Caco-2 (cell line): ENCODE measurements at regions of chr1 and their contacts with region 1.

Region 1: DNA sequence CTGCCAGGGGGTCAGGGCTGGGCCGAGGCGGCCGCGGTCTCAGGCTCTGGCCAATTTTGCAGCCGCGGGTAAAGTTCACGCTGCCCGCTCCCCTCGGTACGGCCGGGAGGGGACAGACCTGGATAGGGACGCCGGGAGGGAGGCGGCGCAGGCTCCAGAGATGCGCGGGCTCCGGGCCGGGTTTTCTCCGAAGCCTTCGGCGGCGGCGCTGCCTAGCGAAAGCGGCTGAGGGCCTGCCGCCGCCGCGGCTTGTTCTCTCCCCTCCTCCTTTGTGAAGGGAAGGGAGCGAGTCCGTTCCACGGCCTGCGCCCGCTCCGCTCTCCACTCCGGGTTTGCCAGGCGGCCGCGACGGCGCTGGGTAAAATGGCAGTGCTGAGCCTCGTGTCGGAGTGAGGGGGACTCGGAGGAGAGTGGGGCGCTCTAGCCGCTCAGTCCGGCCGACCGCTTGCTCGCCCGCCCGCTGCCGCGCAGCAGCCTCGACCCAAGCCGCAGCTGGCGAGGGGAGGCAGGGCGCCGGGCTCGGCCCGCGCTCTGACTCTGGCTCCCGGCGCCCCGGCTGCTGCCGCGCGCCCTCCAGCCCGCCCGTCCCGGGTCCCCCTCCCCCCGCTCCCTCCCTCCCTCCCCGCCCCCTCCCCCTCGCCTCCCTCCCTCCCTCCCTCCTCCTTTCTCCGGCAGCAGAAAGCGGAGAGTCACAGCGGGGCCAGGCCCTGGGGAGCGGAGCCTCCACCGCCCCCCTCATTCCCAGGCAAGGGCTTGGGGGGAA is at the start of gene ARID1A:
- DNase-seq: peak; percentile 95 to 96
- H3K4me3 ChIP-seq: peak within 1 kb of the TSS; percentile 73
- H3K4me3 Mint-ChIP-seq: no peak within 1 kb of the TSS
- H3K27ac Mint-ChIP-seq: peak within 1 kb of the TSS; percentile 97
- H3K4me1 ChIP-seq: peaks cover 41% of the 10 kb centered on the region
- H3K4me1 Mint-ChIP-seq: peaks cover 17% of the 10 kb centered on the region
- H3K27me3 ChIP-seq: no peaks in the 10 kb centered on the region
- H3K27me3 Mint-ChIP-seq: no peaks in the 10 kb centered on the region
- CTCF ChIP-seq: peak in 1 of 2 experiments; percentile 25
- total RNA-seq, gene ARID1A: 66.5 and 73.3 TPM in 2 replicates

Region 2: GRCh38 chr1:26602378-26602959 is 93.1 kb before region 1 on chr1:
- CTCF ChIA-PET with region 1: interaction called, 4 read pairs
- POLR2A ChIA-PET with region 1: interaction called, 3 read pairs
- intact Hi-C with region 1: loop called (anchors 5 kb)
- DNase-seq: peak; percentile 46 to 63
- H3K4me3 ChIP-seq: no peak overlapping the region
- H3K4me3 Mint-ChIP-seq: no peak overlapping the region
- H3K27ac Mint-ChIP-seq: no peak overlapping the region
- H3K4me1 ChIP-seq: no peaks in the 10 kb centered on the region
- H3K4me1 Mint-ChIP-seq: no peaks in the 10 kb centered on the region
- H3K27me3 ChIP-seq: no peaks in the 10 kb centered on the region
- H3K27me3 Mint-ChIP-seq: no peaks in the 10 kb centered on the region
- CTCF ChIP-seq: peak; percentile 55 to 60

Region 3: GRCh38 chr1:26677306-26678115 is 18.0 kb before region 1 on chr1:
- CTCF ChIA-PET with region 1: interaction called, 38 read pairs
- POLR2A ChIA-PET with region 1: interaction called, 14 read pairs
- intact Hi-C with region 1: loop called (anchors 1 kb)
- DNase-seq: peak; percentile 79 to 84
- H3K4me3 ChIP-seq: no peak overlapping the region
- H3K4me3 Mint-ChIP-seq: peak overlapping the region; percentile 26
- H3K27ac Mint-ChIP-seq: no peak overlapping the region
- H3K4me1 ChIP-seq: no peaks in the 10 kb centered on the region
- H3K4me1 Mint-ChIP-seq: peaks cover 11% of the 10 kb centered on the region
- H3K27me3 ChIP-seq: no peaks in the 10 kb centered on the region
- H3K27me3 Mint-ChIP-seq: no peaks in the 10 kb centered on the region
- CTCF ChIP-seq: peak in 1 of 2 experiments; percentile 75

Region 4: GRCh38 chr1:26787706-26788514 is 92.4 kb after region 1 on chr1 and contains the start of gene PIGV:
- CTCF ChIA-PET with region 1: interaction called, 10 read pairs
- POLR2A ChIA-PET with region 1: interaction called, 16 read pairs
- intact Hi-C with region 1: loop called (anchors 1 kb)
- DNase-seq: peak; percentile 82 to 89
- H3K4me3 ChIP-seq: peak within 1 kb of the TSS; percentile 77
- H3K4me3 Mint-ChIP-seq: peak within 1 kb of the TSS; percentile 87
- H3K27ac Mint-ChIP-seq: peak within 1 kb of the TSS; percentile 90
- H3K4me1 ChIP-seq: peaks cover 44% of the 10 kb centered on the region
- H3K4me1 Mint-ChIP-seq: peaks cover 30% of the 10 kb centered on the region
- H3K27me3 ChIP-seq: no peaks in the 10 kb centered on the region
- H3K27me3 Mint-ChIP-seq: no peaks in the 10 kb centered on the region
- CTCF ChIP-seq: no peak
- total RNA-seq, gene PIGV: 10.0 and 12.3 TPM in 2 replicates

Region 5: GRCh38 chr1:26864610-26865527 is 169.3 kb after region 1 on chr1:
- CTCF ChIA-PET with region 1: no interaction called
- POLR2A ChIA-PET with region 1: interaction called, 13 read pairs
- intact Hi-C with region 1: loop called (anchors 10 kb)
- DNase-seq: peak; percentile 95 to 97
- H3K4me3 ChIP-seq: peak overlapping the region; percentile 56
- H3K4me3 Mint-ChIP-seq: peak overlapping the region; percentile 82
- H3K27ac Mint-ChIP-seq: peak overlapping the region; percentile 94
- H3K4me1 ChIP-seq: 0 out of 2 replicates have a peak, but pooled peaks cover 7% of the 10 kb centered on the region
- H3K4me1 Mint-ChIP-seq: peaks cover 14% of the 10 kb centered on the region
- H3K27me3 ChIP-seq: no peaks in the 10 kb centered on the region
- H3K27me3 Mint-ChIP-seq: no peaks in the 10 kb centered on the region
- CTCF ChIP-seq: no peak

Region 6: GRCh38 chr1:26874896-26875295 is 179.4 kb after region 1 on chr1:
- CTCF ChIA-PET with region 1: no interaction called
- POLR2A ChIA-PET with region 1: no interaction called
- intact Hi-C with region 1: no loop called
- DNase-seq: no peak
- H3K4me3 ChIP-seq: no peak overlapping the region
- H3K4me3 Mint-ChIP-seq: no peak overlapping the region
- H3K27ac Mint-ChIP-seq: no peak overlapping the region
- H3K4me1 ChIP-seq: no peaks in the 10 kb centered on the region
- H3K4me1 Mint-ChIP-seq: no peaks in the 10 kb centered on the region
- H3K27me3 ChIP-seq: no peaks in the 10 kb centered on the region
- H3K27me3 Mint-ChIP-seq: no peaks in the 10 kb centered on the region
- CTCF ChIP-seq: no peak

Region 7: DNA sequence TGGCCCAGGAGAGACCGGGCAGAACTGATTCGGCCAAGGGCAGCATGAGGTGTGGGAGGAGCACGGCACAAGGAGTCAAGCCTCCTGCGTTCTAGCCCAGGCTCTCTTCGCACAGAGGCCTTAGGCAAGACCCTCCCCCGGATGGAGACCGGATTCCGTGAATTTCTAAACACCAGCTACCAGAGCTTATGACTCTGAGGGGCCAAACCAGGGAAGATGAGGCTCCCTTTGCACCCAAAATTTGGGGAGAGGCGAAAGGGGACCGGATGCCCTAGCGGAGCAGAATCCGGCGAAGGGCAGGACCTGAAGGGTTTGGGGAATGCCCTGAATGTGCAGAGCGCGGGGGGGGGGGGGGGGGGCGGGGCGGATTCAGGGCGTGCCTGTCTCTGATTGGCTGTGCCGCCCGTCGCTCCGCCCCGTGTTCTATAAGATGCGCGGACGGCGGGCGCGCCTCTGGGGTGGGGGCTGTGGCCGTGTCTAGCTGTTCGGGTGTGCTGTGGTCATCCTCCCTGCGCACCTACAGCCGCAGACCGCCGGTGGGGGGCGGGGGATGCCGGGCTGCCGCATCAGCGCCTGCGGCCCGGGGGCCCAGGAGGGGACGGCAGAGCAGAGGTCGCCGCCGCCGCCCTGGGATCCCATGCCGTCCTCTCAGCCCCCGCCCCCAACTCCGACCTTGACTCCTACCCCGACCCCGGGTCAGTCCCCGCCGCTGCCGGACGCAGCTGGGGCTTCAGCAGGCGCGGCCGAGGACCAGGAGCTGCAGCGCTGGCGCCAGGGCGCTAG is 297.9 kb after region 1 on chr1 and contains the start of gene TRNP1:
- CTCF ChIA-PET with region 1: no interaction called
- POLR2A ChIA-PET with region 1: no interaction called
- intact Hi-C with region 1: loop called (anchors 5 kb)
- DNase-seq: peak; percentile 91
- H3K4me3 ChIP-seq: peak within 1 kb of the TSS; percentile 83
- H3K4me3 Mint-ChIP-seq: peak within 1 kb of the TSS; percentile 76
- H3K27ac Mint-ChIP-seq: peak within 1 kb of the TSS; percentile 87
- H3K4me1 ChIP-seq: peaks cover 56% of the 10 kb centered on the region
- H3K4me1 Mint-ChIP-seq: peaks cover 17% of the 10 kb centered on the region
- H3K27me3 ChIP-seq: no peaks in the 10 kb centered on the region
- H3K27me3 Mint-ChIP-seq: no peaks in the 10 kb centered on the region
- CTCF ChIP-seq: no peak
- total RNA-seq, gene TRNP1: 23.3 and 23.6 TPM in 2 replicates